Aorta (tissue), 5 donors: ENCODE measurements at regions of chrX and their contacts with region 1.

Region 1: DNA sequence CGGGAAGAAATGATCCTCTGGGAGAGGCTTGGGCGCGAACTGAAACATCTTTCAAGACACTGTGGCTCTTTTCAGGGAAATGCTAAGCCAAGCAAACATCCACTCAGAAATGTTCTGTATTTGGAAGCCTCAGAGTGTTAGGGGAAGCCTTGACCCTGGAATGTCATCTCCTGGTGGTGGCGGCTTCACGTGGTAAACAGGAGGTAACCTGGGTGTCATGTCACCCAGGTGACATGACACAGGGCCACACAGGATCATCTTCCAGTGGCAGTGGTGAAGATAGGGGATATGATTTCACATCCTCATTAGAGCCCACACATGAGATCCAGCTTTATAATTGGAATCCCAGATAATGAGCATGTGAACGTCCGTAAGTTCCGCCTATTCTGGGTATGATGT is 140.0 kb downstream of the TBL1X start:
- DNase-seq: no peak
- ATAC-seq: no peak
- H3K4me3 ChIP-seq: no peak overlapping the region
- H3K27ac ChIP-seq: no peak overlapping the region
- H3K4me1 ChIP-seq: peaks cover 0 to 2% of the 10 kb centered on the region in 2 donors
- H3K27me3 ChIP-seq: no peaks in the 10 kb centered on the region

Region 2: GRCh38 chrX:8841911-8842310 is 763.0 kb before region 1 on chrX:
- intact Hi-C with region 1: no loop called
- DNase-seq: no peak
- ATAC-seq: no peak
- H3K4me3 ChIP-seq: no peak overlapping the region
- H3K27ac ChIP-seq: no peak overlapping the region
- H3K4me1 ChIP-seq: no peaks in the 10 kb centered on the region
- H3K27me3 ChIP-seq: no peaks in the 10 kb centered on the region

Region 3: DNA sequence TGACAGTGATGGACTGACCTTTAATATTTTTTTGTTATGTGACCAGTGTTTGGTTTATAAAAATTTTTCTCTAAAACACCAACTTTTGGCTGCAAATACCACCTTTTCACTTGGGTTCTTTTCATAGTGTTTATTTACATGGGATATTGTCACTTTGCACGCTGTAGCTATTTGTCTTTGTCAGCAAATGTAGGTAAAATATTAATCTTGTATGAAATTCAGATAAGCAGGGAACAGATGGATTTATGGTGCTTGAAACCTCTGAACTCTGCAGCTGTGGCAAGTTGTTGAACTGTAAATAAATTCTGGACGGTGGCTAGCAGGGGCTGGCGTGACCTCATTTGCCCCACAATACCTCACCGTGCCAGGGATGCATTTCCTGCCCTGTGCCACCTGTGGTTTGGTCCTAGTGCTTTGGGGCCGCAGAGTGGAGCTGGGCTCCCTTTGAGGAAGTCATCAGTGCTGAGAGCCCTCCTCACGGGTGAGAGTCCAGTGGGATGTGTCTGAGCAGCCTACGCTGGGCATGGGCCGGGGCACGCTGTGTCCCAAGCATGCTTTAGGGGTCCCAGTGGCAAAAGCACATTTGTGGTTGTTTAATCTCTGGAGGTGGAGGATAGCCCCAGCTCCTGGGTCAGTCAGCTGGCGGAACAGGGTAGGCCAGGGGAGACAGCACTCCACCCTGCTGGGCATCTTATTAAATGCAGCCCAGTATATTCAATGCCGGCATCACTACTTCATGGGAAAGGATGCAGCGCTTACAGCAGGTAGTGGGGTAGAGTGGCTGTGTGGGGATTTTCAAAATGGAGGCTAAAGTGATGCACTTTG is 31.4 kb before region 1 on chrX:
- intact Hi-C with region 1: loop called in 1 of 2 experiments (anchors 5 kb)
- DNase-seq: no peak
- ATAC-seq: no peak
- H3K4me3 ChIP-seq: no peak overlapping the region
- H3K27ac ChIP-seq: no peak overlapping the region
- H3K4me1 ChIP-seq: peaks cover 0 to 2% of the 10 kb centered on the region in 2 donors
- H3K27me3 ChIP-seq: no peaks in the 10 kb centered on the region